A673 (cell line): ENCODE measurements at regions of chr1 and their contacts with region 1.

Region 1: GRCh38 chr1:240691521-240692338 is 79.8 kb upstream of the GREM2 start:
- DNase-seq: peak; percentile 3
- H3K4me3 ChIP-seq: no peak overlapping the region
- H3K27ac ChIP-seq: no peak overlapping the region
- H3K4me1 ChIP-seq: no peaks in the 10 kb centered on the region
- H3K27me3 ChIP-seq: peaks cover 3% of the 10 kb centered on the region
- CTCF ChIP-seq: peak; percentile 46

Region 2: DNA sequence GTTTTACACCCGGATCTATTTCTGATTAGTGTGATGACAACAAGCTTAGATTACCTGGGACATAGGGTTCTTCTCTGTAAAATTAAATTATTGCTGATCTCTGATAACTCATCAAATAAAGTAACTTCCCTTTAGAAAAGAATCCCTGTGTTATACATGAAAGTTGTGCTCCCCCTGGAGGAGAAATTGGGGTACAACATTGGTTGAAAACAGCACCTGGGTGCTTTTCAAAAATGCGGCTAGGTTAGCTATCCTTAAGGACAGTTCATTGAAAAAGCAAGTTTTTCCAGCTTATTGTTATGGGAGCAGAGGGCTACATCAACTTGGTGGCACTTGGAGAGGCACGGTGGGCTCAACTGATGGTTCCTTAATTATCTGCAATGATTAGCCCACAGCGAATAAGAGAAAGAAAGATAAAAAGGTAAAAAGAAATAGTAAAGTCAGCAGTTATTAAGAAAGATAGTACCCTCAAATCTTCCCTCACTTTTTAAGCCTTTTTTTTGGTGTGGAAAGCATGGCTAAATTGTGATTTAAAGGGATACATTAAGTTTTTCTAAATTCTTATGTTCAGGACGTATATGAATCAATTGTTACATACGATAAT is 502.2 kb before region 1 on chr1:
- CTCF ChIA-PET with region 1: no interaction called
- POLR2A ChIA-PET with region 1: no interaction called
- intact Hi-C with region 1: loop called (anchors 5 kb)
- DNase-seq: peak; percentile 30
- H3K4me3 ChIP-seq: no peak overlapping the region
- H3K27ac ChIP-seq: no peak overlapping the region
- H3K4me1 ChIP-seq: no peaks in the 10 kb centered on the region
- H3K27me3 ChIP-seq: peaks cover 7% of the 10 kb centered on the region
- CTCF ChIP-seq: peak; percentile 58

Region 3: GRCh38 chr1:240455228-240455821 is 236.4 kb before region 1 on chr1:
- CTCF ChIA-PET with region 1: no interaction called
- POLR2A ChIA-PET with region 1: no interaction called
- intact Hi-C with region 1: loop called (anchors 10 kb)
- DNase-seq: peak; percentile 8
- H3K4me3 ChIP-seq: no peak overlapping the region
- H3K27ac ChIP-seq: no peak overlapping the region
- H3K4me1 ChIP-seq: no peaks in the 10 kb centered on the region
- H3K27me3 ChIP-seq: no peaks in the 10 kb centered on the region
- CTCF ChIP-seq: peak; percentile 46